PC-9 (cell line): ENCODE measurements at regions of chr6 and their contacts with region 1.

Region 1: GRCh38 chr6:30717042-30717844 is at the start of gene MDC1:
- DNase-seq: peak; percentile 99 to 100
- H3K4me3 ChIP-seq: peak within 1 kb of the TSS; percentile 85
- H3K27ac ChIP-seq: peak within 1 kb of the TSS; percentile 82
- H3K4me1 ChIP-seq: peaks cover 32% of the 10 kb centered on the region
- H3K27me3 ChIP-seq: no peaks in the 10 kb centered on the region
- CTCF ChIP-seq: no peak
- total RNA-seq, gene MDC1: 72.9 and 81.6 TPM in 2 replicates

Region 2: DNA sequence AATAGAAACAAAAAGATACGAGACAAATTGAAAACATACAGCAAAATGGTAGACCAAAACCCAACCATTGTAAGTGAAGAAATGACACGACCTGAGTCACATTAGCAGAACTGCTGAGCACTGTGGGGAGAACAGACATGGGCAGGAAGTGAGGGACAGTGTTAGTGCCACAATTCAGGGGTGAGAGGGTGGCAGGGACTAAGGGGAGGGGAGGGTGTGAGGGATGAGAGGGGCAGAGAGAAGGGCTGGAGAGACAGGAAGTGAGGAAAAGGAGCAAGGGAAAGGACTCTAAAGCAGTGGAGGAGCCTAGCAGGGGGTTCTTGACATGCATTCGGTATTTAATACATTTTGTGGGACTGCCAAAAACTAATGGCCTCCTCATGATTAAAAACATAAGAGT is 459.0 kb before region 1 on chr6:
- CTCF ChIA-PET with region 1: no interaction called
- POLR2A ChIA-PET with region 1: no interaction called
- intact Hi-C with region 1: no loop called
- DNase-seq: no peak
- H3K4me3 ChIP-seq: no peak overlapping the region
- H3K27ac ChIP-seq: no peak overlapping the region
- H3K4me1 ChIP-seq: peaks cover under 1% of the 10 kb centered on the region; the same call in 1 of the 2 replicates
- H3K27me3 ChIP-seq: peaks cover 55% of the 10 kb centered on the region
- CTCF ChIP-seq: no peak

Region 3: GRCh38 chr6:30483677-30484279 is 233.5 kb before region 1 on chr6:
- CTCF ChIA-PET with region 1: no interaction called
- POLR2A ChIA-PET with region 1: no interaction called
- intact Hi-C with region 1: loop called (anchors 2 kb)
- DNase-seq: peak; percentile 45 to 56
- H3K4me3 ChIP-seq: no peak overlapping the region
- H3K27ac ChIP-seq: no peak overlapping the region
- H3K4me1 ChIP-seq: no peaks in the 10 kb centered on the region; the same call in 1 of the 2 replicates
- H3K27me3 ChIP-seq: peaks cover 30% of the 10 kb centered on the region
- CTCF ChIP-seq: peak; percentile 74

Region 4: GRCh38 chr6:30616811-30617564 is 100.3 kb before region 1 on chr6 and contains the start of gene PPP1R10:
- CTCF ChIA-PET with region 1: no interaction called
- POLR2A ChIA-PET with region 1: interaction called, 6 read pairs
- intact Hi-C with region 1: loop called (anchors 1 kb)
- DNase-seq: peak; percentile 98 to 99
- H3K4me3 ChIP-seq: peak within 1 kb of the TSS; percentile 87
- H3K27ac ChIP-seq: peak within 1 kb of the TSS; percentile 86
- H3K4me1 ChIP-seq: peaks cover 35% of the 10 kb centered on the region
- H3K27me3 ChIP-seq: no peaks in the 10 kb centered on the region
- CTCF ChIP-seq: no peak
- total RNA-seq, gene PPP1R10: 47.6 and 69.5 TPM in 2 replicates

Region 5: DNA sequence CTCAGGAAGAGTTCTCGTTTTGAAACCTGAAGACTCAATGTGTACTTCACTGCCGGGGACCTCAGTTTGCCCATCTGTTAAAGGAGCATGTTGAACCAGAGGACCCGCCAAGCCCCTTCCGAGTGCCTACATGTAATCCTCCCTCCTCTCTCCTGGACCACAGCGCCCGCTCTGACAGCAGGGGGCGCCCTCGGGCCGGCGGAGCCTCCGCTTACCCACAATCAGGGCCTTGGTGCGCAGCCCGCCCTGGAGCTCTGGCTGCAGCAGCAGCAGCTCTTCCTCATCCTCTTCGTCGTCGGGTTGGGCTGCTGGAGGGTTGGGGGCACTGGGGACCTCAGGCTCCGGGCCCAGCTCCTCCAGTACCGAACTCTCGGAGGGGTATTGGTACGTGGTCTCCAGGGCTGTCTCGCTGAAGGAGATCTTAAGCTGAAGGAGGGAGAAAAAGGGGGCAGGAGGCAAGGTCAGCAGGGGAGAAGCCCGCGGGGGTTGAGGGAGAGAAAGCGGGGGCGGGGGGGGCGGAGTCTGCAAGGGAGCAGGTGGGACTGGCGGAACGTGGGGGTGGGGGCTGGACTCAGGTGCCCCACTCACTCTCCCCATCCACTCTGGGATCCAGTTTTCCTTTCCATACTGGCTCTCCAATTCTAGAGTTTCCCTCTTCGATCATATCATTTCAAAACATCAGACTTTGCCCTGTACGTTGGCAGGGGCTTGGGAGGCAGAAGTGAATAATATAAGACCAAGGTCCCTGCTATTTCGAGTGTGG is 38.1 kb before region 1 on chr6:
- CTCF ChIA-PET with region 1: interaction called, 4 read pairs
- POLR2A ChIA-PET with region 1: interaction called, 6 read pairs
- intact Hi-C with region 1: loop called (anchors 1 kb)
- DNase-seq: peak in 1 of 2 experiments; percentile 74
- H3K4me3 ChIP-seq: no peak overlapping the region
- H3K27ac ChIP-seq: no peak overlapping the region
- H3K4me1 ChIP-seq: peaks cover 30% of the 10 kb centered on the region
- H3K27me3 ChIP-seq: no peaks in the 10 kb centered on the region
- CTCF ChIP-seq: peak; percentile 94

Region 6: DNA sequence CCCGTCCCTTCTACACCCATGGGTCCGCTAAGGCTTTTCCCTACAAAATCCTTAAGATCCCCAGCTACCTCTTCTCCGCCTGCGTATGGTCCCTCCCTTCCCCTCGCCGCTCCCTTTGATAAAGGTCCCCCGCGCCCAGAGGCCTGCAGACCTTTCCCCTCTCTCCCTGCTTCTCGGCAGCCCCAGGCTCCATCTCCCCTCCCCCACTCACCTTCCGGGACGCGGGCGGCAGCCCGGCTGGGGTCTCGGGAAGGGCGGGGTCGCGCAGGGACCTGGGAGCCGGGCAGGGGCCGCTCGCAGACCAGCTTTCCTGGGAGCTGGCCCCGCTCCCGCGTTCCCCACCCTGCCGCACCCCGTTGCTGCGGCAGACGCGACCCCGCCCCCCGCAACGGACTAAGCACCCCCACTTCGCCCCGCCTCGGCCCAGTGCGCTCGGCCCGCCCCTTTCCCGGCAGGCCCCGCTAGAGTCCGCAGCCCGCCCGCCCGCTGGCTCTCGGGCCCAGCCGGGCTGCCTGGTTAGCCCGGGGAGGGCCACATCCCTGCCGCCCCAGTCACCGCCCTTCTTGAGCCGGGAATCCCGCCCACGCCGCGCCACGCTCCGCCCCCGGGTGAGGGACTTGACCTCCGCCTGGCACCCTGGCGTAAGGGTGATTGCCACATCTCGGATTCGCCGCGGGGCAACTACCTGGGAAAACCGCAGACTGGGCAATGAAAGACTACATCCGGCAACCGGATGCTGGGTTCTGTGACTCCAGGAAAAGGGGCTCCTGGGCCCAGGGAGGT is 25.3 kb after region 1 on chr6 and contains the start of gene FLOT1:
- CTCF ChIA-PET with region 1: no interaction called
- POLR2A ChIA-PET with region 1: no interaction called
- intact Hi-C with region 1: loop called (anchors 2 kb)
- DNase-seq: peak; percentile 94 to 100
- H3K4me3 ChIP-seq: peak within 1 kb of the TSS; percentile 86
- H3K27ac ChIP-seq: peak within 1 kb of the TSS; percentile 93
- H3K4me1 ChIP-seq: peaks cover 59% of the 10 kb centered on the region
- H3K27me3 ChIP-seq: no peaks in the 10 kb centered on the region
- CTCF ChIP-seq: no peak
- total RNA-seq, gene FLOT1: 225 and 234 TPM in 2 replicates

Region 7: DNA sequence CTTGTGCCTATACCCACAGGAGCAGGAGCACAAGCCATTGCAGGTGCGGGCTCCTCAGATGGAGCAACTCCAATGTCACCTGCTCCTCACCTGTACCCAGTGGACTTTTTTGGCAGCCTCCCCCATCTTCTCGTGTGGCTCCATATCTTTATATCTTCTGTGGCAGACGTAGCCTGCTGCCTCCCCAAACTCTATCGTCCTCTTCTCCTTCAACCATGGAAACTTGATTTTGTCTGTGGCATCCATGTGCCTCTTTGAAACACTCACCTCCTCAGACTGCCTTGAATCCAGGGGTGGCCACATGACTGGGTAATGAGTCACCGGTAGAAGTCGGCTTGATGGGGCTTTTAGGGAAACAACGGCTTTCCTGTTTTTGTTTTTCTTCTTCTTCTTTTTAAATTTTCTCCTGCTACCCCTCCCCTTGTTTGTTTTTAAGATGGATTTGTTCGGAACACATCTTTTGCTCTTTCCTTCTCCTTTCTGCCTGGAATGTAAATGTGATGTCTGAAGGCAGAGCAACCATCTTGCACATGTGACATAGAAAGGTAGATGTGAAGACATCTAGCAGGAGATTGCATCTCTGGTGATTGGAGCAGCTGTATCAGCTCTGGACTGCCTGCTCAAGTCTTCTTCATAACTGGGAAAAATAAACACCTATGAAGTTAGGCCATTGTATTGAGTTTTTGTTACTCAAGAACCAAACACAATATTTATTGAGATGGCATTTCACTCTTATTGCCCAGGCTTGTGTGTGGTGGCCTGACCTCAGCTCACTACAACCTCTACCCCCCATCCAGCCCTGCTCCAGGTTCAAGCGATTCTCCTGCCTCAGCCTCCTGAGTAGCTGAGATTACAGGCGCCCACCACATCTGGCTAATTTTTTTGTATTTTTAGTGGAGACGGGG is 97.1 kb after region 1 on chr6:
- CTCF ChIA-PET with region 1: no interaction called
- POLR2A ChIA-PET with region 1: interaction called, 14 read pairs
- intact Hi-C with region 1: no loop called
- DNase-seq: peak; percentile 65 to 84
- H3K4me3 ChIP-seq: peak overlapping the region; percentile 11; the same call in 1 of the 2 replicates
- H3K27ac ChIP-seq: peak overlapping the region; percentile 94
- H3K4me1 ChIP-seq: peaks cover 82% of the 10 kb centered on the region
- H3K27me3 ChIP-seq: no peaks in the 10 kb centered on the region
- CTCF ChIP-seq: no peak